Cardiac septum (tissue), 1 donor: ENCODE measurements at regions of chr3 and their contacts with region 1.

Region 1: DNA sequence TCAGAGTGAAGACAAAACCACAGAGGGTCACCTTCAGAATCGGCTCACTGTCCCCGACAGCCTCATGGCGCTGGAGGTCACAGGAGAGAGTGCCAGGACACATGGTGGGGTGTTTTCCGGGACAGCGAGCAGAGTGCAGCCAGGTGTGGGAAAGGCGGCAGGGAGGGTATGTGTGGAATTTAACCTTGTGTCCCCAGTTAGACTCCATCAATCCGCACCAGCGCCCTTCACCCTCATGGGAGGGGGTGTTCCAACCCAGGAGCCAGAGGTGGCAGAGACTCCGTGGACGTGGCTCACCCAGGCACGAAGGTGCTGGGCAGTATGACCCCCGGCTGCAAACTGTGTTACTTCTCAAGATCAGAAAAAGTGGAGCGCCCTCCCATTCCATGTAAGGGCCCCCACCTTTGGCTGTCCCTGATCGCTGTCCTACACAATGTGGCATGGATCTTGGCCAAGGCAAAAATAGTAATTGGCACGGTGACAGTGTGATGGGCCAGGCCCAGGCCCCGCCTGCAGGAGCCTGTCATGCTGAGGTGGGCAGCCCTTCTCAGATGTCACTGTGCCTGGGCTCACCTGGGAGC is 190.3 kb downstream of the XXYLT1 start:
- DNase-seq: peak; percentile 87

Region 2: DNA sequence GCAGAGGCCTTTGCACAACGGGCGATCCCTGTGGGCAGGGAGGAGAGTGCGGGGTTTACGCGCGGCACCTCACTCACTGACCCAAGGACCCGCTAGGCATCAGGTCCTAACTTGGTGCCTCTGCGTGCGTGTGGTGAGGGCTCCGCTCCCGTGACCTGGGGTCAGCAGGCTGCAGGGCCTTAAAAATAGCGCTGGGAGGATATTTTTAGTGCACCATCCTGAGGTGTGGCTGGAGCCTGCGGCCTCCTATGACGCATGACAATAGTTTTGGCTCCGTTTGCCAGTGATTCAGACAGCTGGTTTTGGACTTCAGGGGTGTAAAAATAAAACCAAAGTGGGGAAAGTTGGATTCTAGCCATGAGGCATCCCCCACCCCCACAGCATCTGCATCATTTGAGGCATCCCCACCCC is 256.0 kb before region 1 on chr3:
- intact Hi-C with region 1: loop called (anchors 2 kb)
- DNase-seq: peak; percentile 90

Region 3: DNA sequence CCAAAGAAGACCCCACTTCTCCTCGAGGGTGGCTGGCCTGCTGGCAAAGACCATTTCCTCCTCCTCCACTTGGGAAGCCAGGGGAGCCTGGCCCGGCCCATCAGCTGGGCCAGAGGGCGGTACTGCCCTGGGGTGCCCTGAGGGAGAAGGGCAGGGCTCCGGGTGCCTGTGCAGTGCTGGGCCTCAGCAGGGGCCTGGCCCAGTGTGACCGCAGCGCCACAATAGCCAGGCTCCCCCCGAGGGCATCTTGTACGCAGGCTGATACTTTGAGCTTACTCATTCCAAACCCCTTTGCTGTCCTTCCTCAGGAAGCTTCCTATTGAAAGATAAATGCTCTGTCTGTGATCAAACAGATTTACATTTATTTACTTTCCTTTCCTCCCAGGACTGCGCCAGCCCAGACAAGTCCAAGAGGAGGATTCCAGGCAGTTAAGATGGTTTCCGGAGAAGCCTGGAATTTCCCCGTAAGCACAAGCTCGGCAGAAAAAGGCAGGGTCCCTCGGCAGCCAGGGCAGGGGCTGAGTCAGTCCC is 49.8 kb before region 1 on chr3:
- intact Hi-C with region 1: loop called (anchors 2 kb)
- DNase-seq: peak; percentile 63

Region 4: DNA sequence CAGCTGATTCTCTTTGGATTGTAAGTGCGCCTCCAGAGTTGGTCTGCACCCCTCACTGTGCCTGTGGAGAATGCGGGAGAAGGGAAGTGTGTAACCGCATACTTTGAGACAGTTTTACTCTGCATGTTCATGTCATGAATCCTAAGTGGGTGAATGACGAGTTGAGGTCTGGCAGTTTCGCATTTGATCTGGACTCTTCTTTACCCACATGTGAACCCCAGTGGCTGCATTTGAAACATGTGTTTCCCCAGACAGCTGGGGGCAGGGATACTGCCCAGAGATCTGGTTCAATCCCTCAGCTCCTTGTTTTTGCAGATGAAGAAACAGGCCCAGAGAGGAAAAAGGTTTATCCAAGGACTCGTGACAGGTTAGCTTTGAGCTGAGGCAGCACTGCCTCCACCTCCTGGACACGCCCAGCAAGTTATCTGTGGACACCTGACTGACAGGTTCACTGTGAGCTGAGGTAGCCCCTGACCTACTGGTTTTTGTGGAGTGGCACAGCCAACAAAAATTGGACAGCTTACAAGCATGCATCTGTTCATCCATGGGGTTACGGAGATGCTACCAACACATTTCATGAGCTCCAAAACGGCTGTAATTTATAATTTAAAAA is 17.0 kb before region 1 on chr3:
- intact Hi-C with region 1: loop called (anchors 2 kb)
- DNase-seq: no peak